Ovary (tissue), 10 donors: ENCODE measurements at regions of chr7 and their contacts with region 1.

Region 1: DNA sequence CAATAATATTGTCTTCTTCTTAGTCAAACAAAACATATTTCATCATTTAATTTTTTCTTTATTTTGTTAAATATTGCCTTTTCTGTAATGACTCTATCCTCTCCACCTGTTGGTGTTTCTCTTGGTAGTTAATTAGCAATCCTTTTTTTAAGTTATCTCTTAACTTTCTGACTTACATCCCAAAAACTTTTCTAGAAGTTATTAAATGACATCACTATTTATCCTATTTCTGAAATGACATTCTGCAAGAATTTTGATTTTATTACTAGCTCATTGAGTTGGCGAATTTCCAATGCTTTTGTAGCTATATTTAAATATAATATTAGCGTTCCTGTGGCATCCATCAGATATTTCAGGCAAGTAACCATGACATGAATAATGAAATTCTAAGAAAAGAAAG is 296.4 kb upstream of the GRM3 start:
- DNase-seq: no peak
- H3K4me3 ChIP-seq: no peak overlapping the region
- H3K27ac ChIP-seq: no peak overlapping the region
- H3K4me1 ChIP-seq: no peaks in the 10 kb centered on the region
- H3K27me3 ChIP-seq: no peaks in the 10 kb centered on the region
- CTCF ChIP-seq: no peak
- EP300 ChIP-seq: no peak
- POLR2A ChIP-seq: no peak

Region 2: DNA sequence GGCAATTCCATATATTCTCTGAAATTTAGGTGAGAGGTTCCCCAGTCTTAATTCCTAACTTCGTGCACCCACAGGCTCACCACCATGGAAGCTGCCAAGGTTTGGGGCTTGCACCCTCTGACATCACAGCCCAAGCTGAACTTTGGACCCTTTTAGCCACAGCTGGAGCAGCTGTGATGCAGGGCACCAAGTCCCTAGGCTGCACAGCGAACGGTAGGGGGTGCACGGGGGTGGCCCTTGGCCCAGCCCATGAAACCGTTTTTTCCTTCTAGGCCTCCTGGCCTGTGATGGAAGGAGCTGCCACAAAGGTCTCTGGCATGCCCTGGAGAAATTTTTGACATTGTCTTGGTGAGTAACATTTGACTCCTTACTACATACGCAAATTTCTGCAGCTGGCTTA is 44.5 kb after region 1 on chr7:
- intact Hi-C with region 1: loop called in 1 of 4 experiments (anchors 2 kb)
- DNase-seq: no peak
- H3K4me3 ChIP-seq: no peak overlapping the region
- H3K27ac ChIP-seq: no peak overlapping the region
- H3K4me1 ChIP-seq: no peaks in the 10 kb centered on the region
- H3K27me3 ChIP-seq: no peaks in the 10 kb centered on the region
- CTCF ChIP-seq: no peak
- EP300 ChIP-seq: no peak
- POLR2A ChIP-seq: no peak